Dorsolateral prefrontal cortex (tissue), 120 donors: ENCODE measurements at regions of chr1 and their contacts with region 1.

Region 1: DNA sequence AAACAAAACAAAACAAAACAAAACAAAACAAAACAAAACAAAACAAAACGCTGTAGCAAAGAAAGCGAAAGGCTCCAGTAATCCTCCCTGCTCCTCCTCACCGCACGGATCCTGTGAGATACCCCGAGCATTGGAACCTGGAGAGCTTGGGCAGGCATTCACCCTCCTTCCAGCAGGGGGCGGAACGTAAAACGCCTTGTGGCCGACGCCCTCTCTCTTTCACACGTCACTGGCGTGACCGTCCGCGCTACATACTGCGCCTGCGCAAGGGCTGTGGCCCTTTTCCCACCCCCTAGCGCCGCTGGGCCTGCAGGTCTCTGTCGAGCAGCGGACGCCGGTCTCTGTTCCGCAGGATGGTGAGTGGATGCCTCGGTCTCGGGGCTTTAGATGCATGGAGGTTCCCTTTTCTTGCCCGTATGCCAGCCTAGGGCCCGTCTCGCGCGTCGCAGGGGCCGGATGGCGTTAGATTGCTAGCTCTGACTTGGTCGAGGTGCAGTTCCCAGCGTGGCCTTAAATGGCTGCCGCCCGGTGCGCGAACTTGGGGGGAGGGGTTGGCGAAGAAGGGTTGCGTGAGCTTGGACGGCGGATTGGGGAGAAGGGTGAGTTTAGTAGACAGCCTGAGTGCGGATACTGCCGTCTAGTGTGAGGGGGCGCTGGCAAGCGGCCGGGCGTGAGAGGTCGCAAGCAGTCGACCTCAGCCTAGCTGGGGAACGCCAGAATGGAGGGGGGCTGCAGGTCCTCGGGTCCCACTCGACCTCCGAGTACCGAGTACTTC is at the start of gene RPL5:
- DNase-seq: peak; percentile 94 to 98 (median 95)
- H3K4me3 ChIP-seq: peak within 1 kb of the TSS; percentile 67 to 99 (median 91)
- H3K27ac ChIP-seq: peak within 1 kb of the TSS; percentile 57 to 99 (median 94)
- H3K27me3 ChIP-seq: no peaks in the 10 kb centered on the region
- CTCF ChIP-seq: peak; percentile 89 to 100 (median 98)
- total RNA-seq, gene RPL5: 222 to 435 (median 286) TPM

Region 2: GRCh38 chr1:92754000-92754718 is 77.8 kb before region 1 on chr1:
- intact Hi-C with region 1: loop called (anchors 5 kb)
- DNase-seq: no peak
- H3K4me3 ChIP-seq: no peak overlapping the region
- H3K27ac ChIP-seq: peak overlapping the region in 20 of 59 donors; percentile 2 to 80 (median 47)
- H3K27me3 ChIP-seq: no peaks in the 10 kb centered on the region
- CTCF ChIP-seq: peak in 1 of 56 donors; percentile 15

Region 3: DNA sequence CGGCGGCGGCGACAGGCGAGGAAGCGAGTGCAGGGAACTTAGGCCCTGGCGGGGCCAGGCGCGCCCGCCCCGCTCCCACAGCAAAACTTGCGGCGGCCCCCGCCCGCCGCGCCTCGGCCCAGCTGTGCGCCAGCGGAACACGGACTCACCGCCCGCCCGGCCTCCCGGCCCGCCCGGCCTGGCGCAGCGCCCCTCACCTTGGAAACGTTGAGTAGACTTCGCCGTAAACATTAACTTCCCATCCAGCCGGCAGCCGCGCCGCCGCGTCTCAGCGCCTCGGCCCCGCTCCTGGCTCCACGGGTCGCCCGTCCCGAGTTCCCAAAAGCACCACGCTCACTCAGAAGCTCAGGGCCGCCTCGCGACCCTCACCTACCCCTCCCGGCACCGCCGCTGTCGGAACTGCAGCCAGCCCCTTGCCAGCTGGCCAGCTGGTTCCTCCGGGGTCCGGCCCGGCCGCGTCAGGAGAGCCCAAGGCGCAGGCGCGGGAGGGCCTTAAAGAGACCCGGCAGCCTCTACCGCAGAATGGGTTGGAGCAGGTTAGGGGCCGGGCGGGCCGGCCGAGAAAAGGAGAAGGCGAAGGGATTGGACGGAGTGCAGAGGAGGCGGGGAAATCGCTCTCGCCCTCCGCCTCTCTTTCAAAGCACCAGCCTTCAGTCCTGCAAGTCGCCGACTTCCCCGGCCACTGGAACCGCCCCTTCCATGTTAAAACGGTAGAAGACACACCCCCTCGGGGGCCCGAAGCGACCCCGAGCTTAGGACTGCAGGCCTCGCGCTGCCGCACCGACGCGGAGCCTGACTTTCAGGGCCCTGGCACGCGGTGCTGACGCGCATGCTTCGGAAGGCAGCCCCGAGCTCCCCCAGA is 47.1 kb before region 1 on chr1 and contains the start of gene EVI5:
- intact Hi-C with region 1: loop called in 1 of 2 experiments (anchors 5 kb)
- DNase-seq: peak; percentile 75 to 93 (median 88)
- H3K4me3 ChIP-seq: peak within 1 kb of the TSS; percentile 67 to 97 (median 89)
- H3K27ac ChIP-seq: peak within 1 kb of the TSS; percentile 73 to 97 (median 92)
- H3K27me3 ChIP-seq: no peaks in the 10 kb centered on the region
- CTCF ChIP-seq: peak in 32 of 56 donors; percentile 5 to 52 (median 32)
- total RNA-seq, gene EVI5: 37.6 to 71.9 (median 55.0) TPM

Region 4: DNA sequence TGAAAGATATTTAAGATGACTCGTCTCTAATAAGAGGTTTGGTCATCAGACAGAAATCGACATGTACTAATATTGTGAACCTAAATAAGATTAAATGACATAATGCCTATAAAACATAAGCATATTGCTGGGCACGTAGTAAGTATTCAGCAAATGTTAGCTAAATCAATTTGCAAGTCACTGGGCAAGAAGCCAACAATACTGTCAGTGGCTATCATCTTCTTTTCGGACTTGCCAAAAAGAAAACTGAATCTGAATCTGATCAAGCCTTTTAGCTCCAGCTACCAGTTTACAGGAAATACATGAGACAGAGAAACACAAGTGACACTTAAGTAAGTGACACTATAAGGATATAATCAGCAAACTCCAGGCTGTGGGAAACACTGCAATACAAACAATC is 45.8 kb after region 1 on chr1:
- intact Hi-C with region 1: no loop called
- DNase-seq: no peak
- H3K4me3 ChIP-seq: peak overlapping the region in 54 of 59 donors; percentile 1 to 67 (median 44)
- H3K27ac ChIP-seq: peak overlapping the region; percentile 53 to 98 (median 94)
- H3K27me3 ChIP-seq: no peaks in the 10 kb centered on the region
- CTCF ChIP-seq: no peak

Region 5: DNA sequence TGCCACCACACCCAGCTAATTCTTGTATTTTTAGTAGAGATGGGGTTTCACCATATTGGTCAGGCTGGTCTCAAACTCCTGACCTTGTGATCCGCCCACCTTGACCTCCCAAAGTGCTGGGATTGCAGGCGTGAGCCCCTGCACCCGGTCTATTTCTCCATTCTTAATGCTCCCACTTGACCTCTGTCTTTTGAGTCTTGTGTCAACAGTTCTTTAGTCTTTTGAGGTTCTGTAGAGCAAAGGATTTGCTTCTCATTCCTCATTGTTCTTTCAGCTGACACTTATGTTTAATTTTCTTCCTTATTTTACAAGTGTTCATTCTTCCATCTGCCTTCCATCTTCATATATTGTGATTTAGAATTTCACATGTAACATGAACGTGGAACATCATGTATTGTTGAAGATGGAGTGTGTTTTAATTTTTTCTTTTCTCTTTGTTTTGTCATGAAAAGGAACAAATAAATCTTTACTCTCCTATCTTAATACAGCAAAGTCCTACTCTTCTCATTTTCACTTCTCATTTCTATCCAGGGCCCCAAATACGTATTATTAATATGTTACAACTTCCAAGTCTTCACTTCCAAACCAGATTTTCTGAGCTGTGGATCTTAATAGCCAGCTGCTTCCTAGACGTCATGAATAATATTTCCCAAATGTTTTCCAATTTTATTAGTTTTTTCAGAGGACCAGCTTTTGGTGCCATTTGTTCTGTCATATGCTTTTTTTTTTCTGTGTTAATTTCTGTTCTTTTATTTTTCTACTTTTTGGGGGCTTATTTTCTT is 264.0 kb after region 1 on chr1:
- intact Hi-C with region 1: no loop called
- DNase-seq: no peak
- H3K4me3 ChIP-seq: no peak overlapping the region
- H3K27ac ChIP-seq: no peak overlapping the region
- H3K27me3 ChIP-seq: no peaks in the 10 kb centered on the region
- CTCF ChIP-seq: no peak